ENCODE measurements at regions of chr11 and their contacts with region 1.

Region 1: GRCh38 chr11:100687630-100688395 is 725 bp downstream of the ARHGAP42 start:
- DNase-seq: peak; percentile 24
- ATAC-seq: peak; percentile 28
- H3K4me3 Mint-ChIP-seq: peak overlapping the region; percentile 58
- H3K27ac Mint-ChIP-seq: no peak overlapping the region
- H3K4me1 Mint-ChIP-seq: peaks cover 16% of the 10 kb centered on the region
- H3K27me3 Mint-ChIP-seq: peaks cover 27% of the 10 kb centered on the region

Region 2: GRCh38 chr11:100316952-100317351 is 370.9 kb before region 1 on chr11:
- CTCF ChIA-PET with region 1: no interaction called
- POLR2A ChIA-PET with region 1: no interaction called
- intact Hi-C with region 1: no loop called
- DNase-seq: no peak
- ATAC-seq: no peak
- H3K4me3 Mint-ChIP-seq: no peak overlapping the region
- H3K27ac Mint-ChIP-seq: no peak overlapping the region
- H3K4me1 Mint-ChIP-seq: no peaks in the 10 kb centered on the region
- H3K27me3 Mint-ChIP-seq: no peaks in the 10 kb centered on the region

Region 3: DNA sequence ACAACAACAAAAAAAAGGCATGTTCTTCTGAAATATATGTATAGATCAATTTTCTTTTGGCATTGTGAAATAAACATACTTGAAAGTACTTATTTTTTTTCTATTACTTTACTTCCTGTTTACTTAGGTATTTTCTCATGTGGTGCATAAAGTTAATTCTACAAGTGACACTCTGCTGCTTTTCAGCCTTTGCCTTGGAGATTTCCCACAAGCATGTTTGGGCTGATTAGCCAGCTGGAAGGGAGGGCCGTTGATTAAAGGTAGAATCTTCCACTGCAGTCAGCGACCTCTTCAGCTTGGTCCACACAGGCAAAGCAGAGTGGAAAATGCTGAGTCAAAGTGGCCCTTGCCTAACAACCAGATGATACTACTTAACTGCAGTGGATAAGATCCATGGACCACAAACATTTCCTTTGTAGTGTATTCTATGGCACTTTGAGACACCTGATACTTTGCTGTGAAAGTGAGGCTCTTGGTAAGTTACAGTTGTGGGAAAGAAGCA is 175.3 kb after region 1 on chr11:
- CTCF ChIA-PET with region 1: no interaction called
- POLR2A ChIA-PET with region 1: no interaction called
- intact Hi-C with region 1: loop called (anchors 5 to 10 kb)
- DNase-seq: no peak
- ATAC-seq: no peak
- H3K4me3 Mint-ChIP-seq: no peak overlapping the region
- H3K27ac Mint-ChIP-seq: no peak overlapping the region
- H3K4me1 Mint-ChIP-seq: no peaks in the 10 kb centered on the region
- H3K27me3 Mint-ChIP-seq: no peaks in the 10 kb centered on the region

Measured in activated CD4-positive, alpha-beta T cell treated with anti-CD3 and anti-CD28 coated beads for 36 hours (primary cell).